ENCODE measurements at regions of chr15 and their contacts with region 1.

Region 1: DNA sequence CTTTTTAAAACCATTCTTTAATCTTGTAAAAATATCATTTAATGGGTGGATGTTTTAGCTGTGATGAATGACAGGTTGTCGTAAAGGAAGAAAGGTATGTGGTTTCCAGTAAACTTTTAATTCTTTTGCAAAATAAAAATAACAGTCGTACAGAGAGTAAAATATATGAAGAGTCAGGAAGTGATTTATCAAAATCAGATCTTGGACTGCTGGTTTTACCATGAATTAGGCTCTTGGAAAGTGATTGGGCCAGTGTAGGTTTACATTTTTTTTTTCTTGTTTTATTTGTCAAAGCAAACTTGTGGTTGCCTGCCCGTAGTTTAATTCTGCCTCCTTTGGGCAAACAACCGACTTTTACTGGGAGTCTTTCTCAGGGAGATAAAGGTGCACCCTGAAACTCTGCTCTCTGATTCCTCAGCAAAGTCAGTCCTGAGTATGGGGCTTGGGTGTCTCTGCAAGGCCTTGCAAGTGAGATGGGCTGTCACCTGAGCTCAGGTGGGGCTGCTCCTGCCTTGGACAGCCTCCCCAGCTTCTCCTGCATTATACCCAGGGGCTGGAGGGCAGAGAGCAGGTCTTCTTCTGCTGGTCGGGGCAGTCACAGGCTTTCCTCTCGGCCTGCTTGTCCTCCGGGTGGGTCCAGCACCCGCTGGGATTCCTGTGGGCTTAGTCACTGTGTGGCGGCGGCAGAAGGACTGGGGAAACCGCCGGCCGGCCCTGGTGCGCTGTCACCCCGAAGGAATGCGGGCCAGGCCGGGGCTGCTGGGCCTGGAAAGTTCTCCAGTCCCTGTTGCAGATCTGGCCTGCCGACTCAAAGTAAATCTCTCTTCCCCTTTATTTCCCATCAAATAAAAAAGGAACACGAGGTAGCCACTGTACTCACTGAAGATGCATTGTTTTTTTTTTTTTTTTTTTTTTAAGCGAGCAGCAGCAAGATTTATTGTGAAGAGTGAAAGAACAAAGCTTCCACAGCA is 79.1 kb downstream of the IGF1R start:
- DNase-seq: peak; percentile 96

Region 2: GRCh38 chr15:98626153-98626552 is 101.2 kb before region 1 on chr15:
- intact Hi-C with region 1: no loop called
- DNase-seq: no peak

Region 3: DNA sequence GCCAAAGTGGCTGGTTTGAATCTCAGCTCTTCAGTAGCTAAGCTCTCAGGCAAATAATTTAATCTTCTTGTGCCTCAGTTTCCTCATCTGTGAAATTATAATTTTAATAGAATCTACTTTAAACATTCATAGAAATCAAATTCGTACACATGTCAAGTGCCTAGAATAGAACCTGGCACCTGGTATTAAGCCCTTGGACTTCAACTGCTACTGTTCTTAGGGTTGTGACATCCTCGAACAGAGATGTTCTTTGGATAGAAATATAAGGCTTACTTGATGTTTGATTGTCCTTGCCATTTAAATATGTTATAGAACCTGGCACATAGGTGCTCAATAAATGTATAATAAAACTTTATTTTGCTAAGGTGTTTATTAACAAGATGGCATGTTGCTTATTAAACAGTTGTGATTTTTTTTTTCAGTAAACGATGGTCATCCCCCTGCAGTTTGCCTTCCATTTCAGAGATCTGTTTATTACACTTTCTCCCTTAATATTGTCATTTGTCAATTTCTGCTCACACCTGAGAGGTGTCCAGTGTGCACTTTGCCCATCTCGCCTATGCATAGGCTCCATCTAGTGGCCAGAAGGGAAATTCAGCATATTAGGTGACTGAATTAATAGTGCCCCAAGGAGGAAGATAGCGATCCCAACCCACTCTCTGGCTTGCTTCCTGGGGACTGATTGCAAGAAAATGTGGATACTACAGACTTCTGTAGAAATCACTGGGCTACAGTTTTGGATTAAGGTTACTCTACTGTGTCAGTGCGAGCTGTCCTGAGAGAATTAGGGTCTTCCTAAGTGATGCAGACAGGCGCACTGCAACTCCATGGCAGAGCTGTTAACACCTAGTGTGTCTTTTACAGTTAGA is 68.3 kb before region 1 on chr15:
- intact Hi-C with region 1: loop called in 1 of 2 experiments (anchors 10 kb)
- DNase-seq: no peak

Region 4: DNA sequence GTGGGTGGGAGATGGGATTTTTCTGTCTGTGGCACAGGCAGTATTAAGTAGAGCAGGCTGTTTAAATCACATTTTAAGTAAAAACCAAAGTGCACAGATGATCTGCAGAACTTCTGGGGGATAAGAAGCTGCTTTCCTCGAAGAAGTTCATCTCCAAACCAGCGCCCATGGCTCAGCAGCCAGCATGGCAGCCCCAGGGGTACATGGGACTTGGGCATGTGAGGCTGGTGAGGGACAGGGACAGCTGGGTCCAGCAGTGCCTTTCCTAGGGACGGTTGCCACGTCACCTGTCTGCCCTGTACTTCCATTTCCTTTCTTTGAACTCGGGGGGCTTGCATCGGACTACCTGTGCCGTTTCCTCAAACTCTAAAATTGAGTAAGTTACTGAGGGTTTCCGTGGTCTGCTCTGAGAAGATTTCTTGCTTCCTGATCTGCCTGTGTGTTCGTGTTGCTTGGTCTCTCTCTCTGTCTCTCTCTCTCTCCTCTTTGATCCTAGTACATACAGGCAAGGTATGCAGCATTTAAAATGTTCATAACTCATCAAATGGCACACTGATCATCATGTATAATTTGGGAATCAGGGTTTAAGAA is 11.5 kb before region 1 on chr15:
- intact Hi-C with region 1: loop called in 1 of 2 experiments (anchors 1 kb)
- DNase-seq: no peak

Region 5: DNA sequence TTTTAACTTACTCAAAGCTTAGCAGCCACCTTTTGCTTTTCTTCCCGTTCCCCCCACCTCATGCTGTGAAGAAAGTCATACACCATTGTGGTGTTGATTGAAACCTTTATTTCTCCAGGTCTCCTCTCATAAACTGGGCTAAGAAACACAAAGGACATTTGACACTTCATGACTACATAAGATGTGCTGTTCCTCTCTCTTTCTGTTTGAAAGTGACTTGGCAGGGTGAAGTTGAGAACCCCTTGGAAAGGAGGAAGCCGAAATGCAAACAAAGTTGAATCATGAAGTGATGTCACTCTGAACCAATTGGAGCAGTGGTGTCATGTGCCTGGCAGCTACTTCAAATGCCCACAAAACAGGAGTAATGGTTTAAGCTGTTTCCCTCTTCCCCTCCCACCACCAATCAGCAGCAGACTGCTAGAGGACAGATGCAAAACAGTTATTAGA is 95.6 kb after region 1 on chr15:
- intact Hi-C with region 1: no loop called
- DNase-seq: no peak